Activated CD4-positive, alpha-beta memory T cell treated with anti-CD3 and anti-CD28 coated beads for 36 hours (primary cell): ENCODE measurements at regions of chr12 and their contacts with region 1.

Region 1: DNA sequence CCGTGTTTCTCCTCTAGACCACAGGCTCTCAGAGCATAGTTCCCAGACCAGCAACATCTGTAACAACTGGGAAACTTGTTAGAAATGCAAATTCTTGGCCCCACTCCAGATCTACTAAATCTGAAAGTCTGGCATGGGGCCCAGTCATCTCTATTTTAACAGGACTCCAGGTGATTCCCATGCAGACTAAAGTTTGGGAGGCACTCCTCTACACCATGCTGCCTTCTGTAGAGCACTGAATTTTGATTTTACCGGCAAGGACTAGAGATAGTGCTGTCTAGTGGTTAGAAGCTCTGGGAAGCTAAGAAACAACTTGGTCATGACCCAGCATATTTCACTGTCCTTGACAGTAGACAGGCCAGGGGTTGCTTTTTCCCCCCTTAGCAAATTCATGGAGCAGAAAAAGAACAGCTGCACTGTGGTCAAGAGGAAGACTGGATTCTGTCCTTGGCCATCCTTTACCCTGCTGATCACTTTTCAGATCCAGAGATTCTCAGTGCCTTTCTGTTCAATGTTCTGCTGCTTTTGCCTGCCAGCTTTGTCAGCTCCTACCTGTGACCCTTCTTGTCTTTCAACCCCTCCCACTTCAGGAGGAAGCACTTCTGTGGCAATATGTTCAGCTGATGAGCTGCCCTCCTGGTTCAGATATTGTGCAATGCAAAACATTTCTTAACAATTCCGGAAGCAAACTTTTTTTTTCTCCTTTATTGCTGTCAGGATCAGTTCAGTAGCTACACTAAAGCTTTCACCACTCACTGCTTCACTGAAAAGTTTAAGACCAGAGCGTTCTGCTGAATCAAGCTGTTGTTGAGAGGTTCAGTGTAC is 133.8 kb upstream of the NUDT4 start:
- DNase-seq: peak; percentile 18
- H3K4me3 Mint-ChIP-seq: no peak overlapping the region
- H3K27ac Mint-ChIP-seq: no peak overlapping the region
- H3K4me1 Mint-ChIP-seq: peaks cover 24% of the 10 kb centered on the region
- H3K27me3 Mint-ChIP-seq: no peaks in the 10 kb centered on the region

Region 2: DNA sequence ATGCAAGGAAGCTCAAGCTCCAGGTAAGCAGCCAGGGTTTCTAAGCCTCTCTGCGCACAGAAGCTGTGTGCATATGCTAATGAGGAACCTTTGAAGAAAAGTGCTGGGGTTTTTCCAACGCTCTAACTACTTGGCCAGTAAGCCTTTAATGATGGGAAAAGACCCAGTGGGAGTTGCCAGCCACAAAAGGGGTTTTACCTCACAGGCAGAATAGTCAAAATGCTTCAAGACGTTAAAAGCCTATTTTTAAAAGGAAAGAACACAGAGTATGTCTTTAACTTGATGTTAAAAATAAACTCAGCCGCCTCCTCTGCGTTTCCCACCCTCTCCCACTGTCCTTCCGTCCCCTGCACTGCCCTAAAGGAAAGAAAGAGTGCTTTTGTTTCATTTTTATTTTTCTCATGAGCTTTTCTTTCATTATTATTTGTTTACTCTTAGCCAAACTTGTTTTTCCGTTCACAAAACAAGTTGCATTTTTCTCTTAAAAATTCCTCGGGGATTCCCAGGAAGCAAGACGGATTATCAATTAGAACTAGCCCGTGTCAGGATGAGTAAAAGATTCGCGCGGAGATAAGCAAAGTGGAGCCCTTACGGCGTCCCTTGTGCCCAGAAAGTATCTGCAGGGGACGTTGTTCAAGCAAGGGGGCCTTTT is 75.9 kb before region 1 on chr12:
- CTCF ChIA-PET with region 1: no interaction called
- POLR2A ChIA-PET with region 1: no interaction called
- intact Hi-C with region 1: loop called (anchors 5 kb)
- DNase-seq: peak; percentile 67
- H3K4me3 Mint-ChIP-seq: peak overlapping the region; percentile 61
- H3K27ac Mint-ChIP-seq: no peak overlapping the region
- H3K4me1 Mint-ChIP-seq: peaks cover 15% of the 10 kb centered on the region
- H3K27me3 Mint-ChIP-seq: peaks cover 10% of the 10 kb centered on the region

Region 3: DNA sequence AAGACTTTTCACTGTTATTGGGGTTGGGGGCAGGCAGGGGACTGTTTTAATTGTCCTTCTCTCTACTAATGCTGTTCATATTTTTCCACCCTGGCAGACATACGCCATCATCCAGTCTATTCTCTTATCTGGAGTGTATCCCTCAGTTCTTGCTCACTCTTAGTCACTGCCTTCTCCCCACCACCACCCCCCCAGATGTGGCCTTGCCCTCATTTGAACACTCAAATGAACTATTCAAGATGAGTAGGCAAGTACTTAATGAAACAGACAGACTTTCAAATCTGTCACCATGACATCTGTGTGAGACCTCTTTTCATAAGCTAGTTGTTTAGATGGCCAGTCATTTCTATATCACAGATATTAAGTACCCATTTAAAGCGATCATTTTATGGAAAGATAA is 143.9 kb after region 1 on chr12:
- CTCF ChIA-PET with region 1: no interaction called
- POLR2A ChIA-PET with region 1: no interaction called
- intact Hi-C with region 1: loop called (anchors 2 kb)
- DNase-seq: peak; percentile 83
- H3K4me3 Mint-ChIP-seq: no peak overlapping the region
- H3K27ac Mint-ChIP-seq: peak overlapping the region; percentile 67
- H3K4me1 Mint-ChIP-seq: peaks cover 62% of the 10 kb centered on the region
- H3K27me3 Mint-ChIP-seq: no peaks in the 10 kb centered on the region